MCF 10A (cell line): ENCODE measurements at regions of chrX and their contacts with region 1.

Region 1: DNA sequence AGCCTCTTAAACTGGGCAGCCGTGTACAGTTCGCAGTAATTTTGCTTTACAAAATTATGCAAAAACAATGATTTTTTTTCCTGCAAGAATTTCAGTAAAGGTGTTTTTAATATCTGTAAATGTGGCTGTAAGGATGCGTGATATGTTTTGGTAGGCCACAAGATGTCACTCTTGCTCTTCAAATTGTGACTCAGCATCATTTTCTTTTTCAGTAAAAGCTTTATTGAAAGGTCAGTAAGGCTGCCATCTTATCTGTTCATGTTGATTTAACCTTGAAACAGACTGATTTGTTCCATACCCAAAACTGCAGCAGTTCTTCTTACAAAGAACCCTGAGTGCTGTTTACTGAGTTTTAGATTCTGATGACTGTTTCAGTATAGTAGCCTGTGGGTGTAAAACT is 39.9 kb downstream of the TXLNG start:
- DNase-seq: peak; percentile 56
- H3K4me3 Mint-ChIP-seq: no peak overlapping the region
- H3K27ac Mint-ChIP-seq: no peak overlapping the region
- H3K4me1 Mint-ChIP-seq: peaks cover 15% of the 10 kb centered on the region
- H3K27me3 Mint-ChIP-seq: no peaks in the 10 kb centered on the region
- CTCF ChIP-seq: peak; percentile 60

Region 2: GRCh38 chrX:16559206-16559619 is 267.0 kb before region 1 on chrX:
- CTCF ChIA-PET with region 1: no interaction called
- POLR2A ChIA-PET with region 1: no interaction called
- intact Hi-C with region 1: no loop called
- DNase-seq: no peak
- H3K4me3 Mint-ChIP-seq: no peak overlapping the region
- H3K27ac Mint-ChIP-seq: no peak overlapping the region
- H3K4me1 Mint-ChIP-seq: no peaks in the 10 kb centered on the region
- H3K27me3 Mint-ChIP-seq: peaks cover 27% of the 10 kb centered on the region
- CTCF ChIP-seq: no peak

Region 3: GRCh38 chrX:16807548-16807947 is 18.7 kb before region 1 on chrX:
- CTCF ChIA-PET with region 1: interaction called, 18 read pairs
- POLR2A ChIA-PET with region 1: interaction called, 3 read pairs
- intact Hi-C with region 1: no loop called
- DNase-seq: peak; percentile 40
- H3K4me3 Mint-ChIP-seq: peak overlapping the region; percentile 69
- H3K27ac Mint-ChIP-seq: peak overlapping the region; percentile 49
- H3K4me1 Mint-ChIP-seq: peaks cover 12% of the 10 kb centered on the region
- H3K27me3 Mint-ChIP-seq: no peaks in the 10 kb centered on the region
- CTCF ChIP-seq: peak; percentile 23

Region 4: DNA sequence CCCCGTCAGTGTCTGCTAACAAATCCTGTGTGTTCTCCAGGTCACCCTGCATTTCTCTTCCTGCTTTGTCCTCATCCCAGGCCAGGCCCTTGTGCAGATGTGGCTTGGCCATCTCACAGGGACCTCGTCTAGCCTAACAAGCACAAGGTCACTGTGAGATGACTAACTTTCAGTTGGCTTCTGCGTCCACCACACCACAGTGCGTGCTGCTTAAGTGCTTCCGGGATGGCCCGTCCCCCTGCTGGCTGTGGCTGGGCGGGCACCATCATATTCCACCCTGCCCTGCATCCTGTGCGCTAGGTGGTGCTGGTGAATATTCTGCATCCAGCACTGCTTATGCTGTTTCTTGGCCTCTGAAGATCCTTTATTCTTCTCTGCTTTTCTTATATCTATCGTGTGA is 10.2 kb after region 1 on chrX:
- CTCF ChIA-PET with region 1: interaction called, 41 read pairs
- POLR2A ChIA-PET with region 1: interaction called, 31 read pairs
- intact Hi-C with region 1: no loop called
- DNase-seq: no peak
- H3K4me3 Mint-ChIP-seq: no peak overlapping the region
- H3K27ac Mint-ChIP-seq: no peak overlapping the region
- H3K4me1 Mint-ChIP-seq: peaks cover 15% of the 10 kb centered on the region
- H3K27me3 Mint-ChIP-seq: no peaks in the 10 kb centered on the region
- CTCF ChIP-seq: peak; percentile 9

Region 5: GRCh38 chrX:16882702-16883486 is 56.7 kb after region 1 on chrX:
- CTCF ChIA-PET with region 1: interaction called, 21 read pairs
- POLR2A ChIA-PET with region 1: interaction called, 17 read pairs
- intact Hi-C with region 1: loop called (anchors 1 kb)
- DNase-seq: peak; percentile 72
- H3K4me3 Mint-ChIP-seq: peak overlapping the region; percentile 73
- H3K27ac Mint-ChIP-seq: peak overlapping the region; percentile 27
- H3K4me1 Mint-ChIP-seq: no peaks in the 10 kb centered on the region
- H3K27me3 Mint-ChIP-seq: peaks cover 69% of the 10 kb centered on the region
- CTCF ChIP-seq: peak; percentile 51

Region 6: DNA sequence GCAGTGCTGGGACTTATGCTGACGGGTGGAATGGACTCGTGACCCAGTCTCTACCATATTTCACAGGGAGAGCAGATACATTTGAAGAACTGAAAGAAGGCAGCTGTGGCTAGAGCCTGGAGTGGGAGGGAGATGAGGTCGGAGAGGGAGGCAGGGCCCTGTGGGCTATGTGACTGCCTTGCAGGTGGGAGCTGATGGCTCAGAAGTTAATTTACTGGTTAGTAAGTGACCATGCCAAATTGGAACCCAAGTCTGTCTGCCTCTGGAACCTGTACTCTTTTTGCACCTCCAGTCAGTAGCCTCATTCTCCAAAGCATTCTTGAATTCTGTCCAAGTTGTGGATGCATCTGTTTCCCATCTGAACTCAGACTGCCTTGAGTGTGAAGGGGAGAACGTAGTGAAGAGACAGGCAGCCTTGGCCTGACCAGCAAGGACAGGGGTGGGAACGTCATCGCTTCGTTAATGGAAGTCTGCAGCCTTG is 212.5 kb after region 1 on chrX:
- CTCF ChIA-PET with region 1: interaction called, 87 read pairs
- POLR2A ChIA-PET with region 1: interaction called, 6 read pairs
- intact Hi-C with region 1: no loop called
- DNase-seq: peak; percentile 13
- H3K4me3 Mint-ChIP-seq: no peak overlapping the region
- H3K27ac Mint-ChIP-seq: peak overlapping the region; percentile 3
- H3K4me1 Mint-ChIP-seq: peaks cover 1% of the 10 kb centered on the region
- H3K27me3 Mint-ChIP-seq: peaks cover 69% of the 10 kb centered on the region
- CTCF ChIP-seq: no peak